ENCODE measurements at regions of chr10 and their contacts with region 1.

Region 1: DNA sequence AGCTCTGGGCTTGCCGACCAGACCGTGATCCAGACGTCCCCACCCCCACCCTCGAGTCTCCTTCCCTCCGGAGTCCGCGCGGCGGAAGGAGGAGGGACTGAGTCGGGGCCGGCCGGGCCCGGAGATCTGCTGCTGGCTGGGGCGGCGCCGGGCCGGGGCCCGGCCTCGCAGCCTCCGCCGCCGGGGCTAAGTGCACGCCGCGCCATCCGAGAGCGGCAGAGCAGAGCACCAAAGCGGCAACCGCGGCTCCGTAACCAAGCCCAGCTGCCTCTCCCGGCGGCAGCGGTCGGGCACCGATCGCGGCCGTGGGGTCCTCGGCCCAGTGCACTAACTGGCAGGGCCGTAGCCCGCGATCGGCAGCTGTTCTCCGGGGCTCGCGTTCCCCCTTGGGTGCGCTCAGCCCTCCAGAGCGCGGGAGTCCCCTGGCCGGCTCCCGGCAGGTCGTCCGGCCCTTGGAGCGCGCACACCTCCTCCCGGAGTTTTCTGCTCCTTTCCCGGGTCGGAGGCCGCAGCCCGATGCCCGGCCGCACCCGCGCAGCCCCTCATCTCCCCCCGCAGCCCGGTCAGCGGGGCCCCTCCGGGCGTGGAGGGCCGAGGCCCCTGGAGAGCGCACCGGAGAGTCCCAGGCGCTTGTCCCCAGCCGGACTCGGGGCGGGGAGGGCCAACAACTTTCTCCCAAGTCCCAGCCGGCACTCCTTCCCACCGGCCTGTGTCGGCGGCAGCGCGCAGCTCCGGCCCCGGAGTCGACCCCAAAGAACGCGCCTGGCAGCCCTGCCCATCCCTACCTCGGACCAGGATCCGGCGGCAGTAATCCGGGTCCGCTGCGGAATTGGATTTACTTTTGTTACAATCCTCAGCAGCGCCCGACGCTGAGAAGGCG is 799 bp downstream of the VAX1 start:
- DNase-seq: peak in 35 of 42 donors; percentile 32 to 85 (median 61)

Region 2: GRCh38 chr10:117005027-117005526 is 132.2 kb before region 1 on chr10 and contains the start of gene SHTN1:
- intact Hi-C with region 1: loop called (anchors 10 kb)
- DNase-seq: peak; percentile 56 to 92 (median 84)

Measured in head of caudate nucleus (tissue), 42 donors.